Activated T-helper 2 cell treated with anti-CD3 and anti-CD28 coated beads, Interferon-gamma antibody, Interleukin-2, Interleukin-4, amounts not matched to agents 10 μg/mL and 5 μg/mL and 100 μg/mL, durations not matched to agents 14 hours and 24 hours and 36 hours (primary cell): ENCODE measurements at regions of chr2 and their contacts with region 1.

Region 1: GRCh38 chr2:127884436-127885345 is 1.1 kb downstream of the AMMECR1L start:
- DNase-seq: no peak
- H3K4me3 Mint-ChIP-seq: peak overlapping the region; percentile 95
- H3K27ac Mint-ChIP-seq: peak overlapping the region; percentile 88
- H3K4me1 Mint-ChIP-seq: peaks cover 27% of the 10 kb centered on the region
- H3K27me3 Mint-ChIP-seq: no peaks in the 10 kb centered on the region

Region 2: GRCh38 chr2:127820080-127820668 is 64.5 kb before region 1 on chr2:
- intact Hi-C with region 1: no loop called
- DNase-seq: no peak
- H3K4me3 Mint-ChIP-seq: no peak overlapping the region
- H3K27ac Mint-ChIP-seq: no peak overlapping the region
- H3K4me1 Mint-ChIP-seq: no peaks in the 10 kb centered on the region
- H3K27me3 Mint-ChIP-seq: peaks cover 22% of the 10 kb centered on the region

Region 3: GRCh38 chr2:127984213-127984950 is 99.7 kb after region 1 on chr2:
- intact Hi-C with region 1: loop called (anchors 5 kb)
- DNase-seq: no peak
- H3K4me3 Mint-ChIP-seq: no peak overlapping the region
- H3K27ac Mint-ChIP-seq: no peak overlapping the region
- H3K4me1 Mint-ChIP-seq: peaks cover 29% of the 10 kb centered on the region
- H3K27me3 Mint-ChIP-seq: no peaks in the 10 kb centered on the region